Posterior cingulate gyrus (tissue), 11 donors: ENCODE measurements at regions of chr20 and their contacts with region 1.

Region 1: DNA sequence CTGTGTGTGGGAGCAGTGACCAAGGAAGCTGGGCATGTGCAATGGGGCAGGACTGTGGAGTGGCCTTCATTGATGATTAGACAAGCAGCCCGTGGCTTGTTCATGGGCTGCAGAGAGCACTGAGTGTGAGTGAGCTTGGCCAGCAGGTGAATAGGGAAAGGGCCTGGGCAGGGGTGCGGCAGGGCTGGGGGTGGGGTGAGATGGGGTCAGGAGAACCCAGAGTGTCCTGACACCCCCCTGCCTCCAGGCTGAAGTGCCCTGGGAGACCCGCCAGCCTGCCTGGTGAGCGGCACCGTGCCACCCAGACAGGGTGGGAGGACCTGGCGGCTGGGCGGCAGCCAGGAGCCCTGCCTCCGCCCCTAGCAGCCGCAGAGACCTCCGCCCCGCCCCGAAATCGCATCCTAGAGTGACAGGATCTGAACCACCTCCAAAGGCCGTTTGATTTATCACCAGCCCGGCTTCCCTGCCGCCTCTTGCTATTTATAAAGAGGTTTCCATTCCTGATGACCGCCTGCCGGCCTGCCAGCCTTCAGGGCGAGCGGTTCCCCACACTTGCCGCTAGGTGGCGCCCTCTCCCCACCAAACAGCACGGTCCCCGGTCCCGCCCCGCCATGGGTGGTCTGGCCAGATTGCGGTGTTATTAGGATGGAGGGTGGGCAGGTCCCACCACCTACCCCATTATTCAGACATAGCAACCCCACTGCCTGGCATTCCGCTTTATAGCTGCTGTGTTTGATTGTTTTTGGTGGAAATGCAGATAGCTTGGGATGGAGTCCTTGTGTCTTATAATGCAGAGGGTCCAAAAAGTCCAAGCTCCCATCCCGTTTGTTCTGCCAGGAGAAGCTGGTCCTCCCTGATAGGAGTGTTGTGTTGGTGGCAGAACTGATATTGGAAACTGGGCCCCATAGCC is 3.5 kb downstream of the MYLK2 start:
- DNase-seq: peak; percentile 46 to 96 (median 78)

Region 2: GRCh38 chr20:32091888-32092346 is 269.2 kb after region 1 on chr20:
- intact Hi-C with region 1: loop called (anchors 5 kb)
- DNase-seq: peak; percentile 68 to 96 (median 83)